ENCODE measurements at regions of chr3 and their contacts with region 1.

Region 1: DNA sequence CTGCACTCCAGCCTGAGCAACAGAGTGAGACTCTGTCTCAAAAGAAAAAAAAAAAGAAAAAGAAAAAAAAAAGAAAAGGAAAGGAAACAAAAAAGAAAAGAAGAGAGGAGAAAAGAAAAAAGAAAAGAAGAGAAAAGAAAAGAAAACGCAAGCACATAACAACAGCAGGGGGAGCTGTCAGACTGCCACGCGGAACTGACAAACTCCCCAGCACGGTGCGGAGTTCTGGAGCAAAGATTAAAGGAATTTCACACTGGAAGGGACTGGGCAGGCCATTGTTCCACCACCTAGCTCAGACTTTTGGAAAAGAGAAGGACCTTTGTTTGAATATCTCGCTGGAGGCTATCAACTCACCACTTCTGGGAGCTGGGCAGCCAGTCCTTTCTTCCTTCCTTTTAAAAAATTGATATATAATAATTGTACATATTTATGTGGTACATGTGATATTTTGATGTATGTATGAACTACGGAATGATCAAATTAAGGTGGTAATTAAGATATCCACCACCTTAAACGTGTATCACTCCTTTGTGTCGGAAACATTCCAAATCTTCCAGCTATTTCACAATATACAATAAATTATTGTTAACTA is 40.5 kb downstream of the DPPA2 start:
- DNase-seq: peak; percentile 18 to 32 (median 22)
- ATAC-seq: peak; percentile 61
- H3K4me3 ChIP-seq: no peak overlapping the region
- H3K27ac ChIP-seq: no peak overlapping the region
- H3K4me1 ChIP-seq: no peaks in the 10 kb centered on the region
- H3K27me3 ChIP-seq: no peaks in the 10 kb centered on the region
- CTCF ChIP-seq: peak; percentile 48 to 64 (median 51)
- EP300 ChIP-seq: no peak
- POLR2A ChIP-seq: no peak
- RAD21 ChIP-seq: peak; percentile 17 to 63; a peak in 3 of 4 replicates

Region 2: DNA sequence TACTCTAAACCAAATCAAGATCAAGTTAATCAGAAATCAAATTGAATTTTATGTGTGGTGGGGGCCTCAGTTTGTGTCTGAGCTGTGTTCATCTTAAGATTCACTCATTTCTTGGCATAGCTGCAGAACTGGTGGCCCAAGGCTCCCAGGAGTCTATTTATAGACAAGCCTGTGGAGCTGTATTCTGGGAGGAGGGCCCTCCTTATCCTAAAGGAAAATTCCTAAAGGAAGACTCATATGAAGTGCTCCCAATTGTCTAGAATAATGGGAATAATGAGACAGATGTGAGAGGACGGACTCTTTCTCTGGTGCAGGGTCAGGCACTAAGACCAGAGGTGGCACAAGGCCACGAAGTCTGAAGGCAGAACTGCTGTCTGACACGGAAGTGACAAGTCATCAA is 100.4 kb before region 1 on chr3:
- CTCF ChIA-PET with region 1: no interaction called
- POLR2A ChIA-PET with region 1: no interaction called
- in situ Hi-C with region 1: no loop called
- intact Hi-C with region 1: no loop called
- DNase-seq: no peak
- ATAC-seq: no peak
- H3K4me3 ChIP-seq: no peak overlapping the region
- H3K27ac ChIP-seq: no peak overlapping the region
- H3K4me1 ChIP-seq: no peaks in the 10 kb centered on the region
- H3K27me3 ChIP-seq: no peaks in the 10 kb centered on the region
- CTCF ChIP-seq: no peak
- EP300 ChIP-seq: no peak
- POLR2A ChIP-seq: no peak
- RAD21 ChIP-seq: no peak

Region 3: DNA sequence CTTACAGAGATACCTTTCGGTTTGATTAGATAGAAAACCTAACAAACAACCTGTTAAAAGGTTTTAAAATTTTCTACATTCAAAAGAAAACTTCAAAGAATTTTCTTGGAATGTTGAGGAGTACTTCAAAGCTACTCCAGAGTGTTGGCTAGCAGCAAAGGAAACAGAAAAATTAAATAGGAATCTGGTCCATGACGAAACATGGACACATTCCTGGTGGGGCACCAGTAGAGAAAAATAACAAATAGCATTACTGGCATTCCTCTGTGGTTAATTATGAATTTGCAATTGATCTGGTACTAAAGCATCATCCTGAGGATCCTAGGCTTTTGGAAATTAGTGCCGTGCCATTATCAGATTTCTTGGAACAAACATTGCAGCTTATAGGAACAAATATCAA is 121.0 kb after region 1 on chr3:
- CTCF ChIA-PET with region 1: no interaction called
- POLR2A ChIA-PET with region 1: interaction called, 4 read pairs
- in situ Hi-C with region 1: no loop called
- intact Hi-C with region 1: loop called (anchors 2 kb)
- DNase-seq: no peak
- ATAC-seq: no peak
- H3K4me3 ChIP-seq: no peak overlapping the region
- H3K27ac ChIP-seq: no peak overlapping the region
- H3K4me1 ChIP-seq: peaks cover 0 to 4% of the 10 kb centered on the region in 2 experiments; a peak in 2 of 5 replicates
- H3K27me3 ChIP-seq: no peaks in the 10 kb centered on the region
- CTCF ChIP-seq: no peak
- EP300 ChIP-seq: no peak
- POLR2A ChIP-seq: no peak
- RAD21 ChIP-seq: no peak

Region 4: GRCh38 chr3:110314512-110315114 is 1038.8 kb after region 1 on chr3:
- CTCF ChIA-PET with region 1: no interaction called
- POLR2A ChIA-PET with region 1: no interaction called
- in situ Hi-C with region 1: no loop called
- intact Hi-C with region 1: loop called (anchors 5 kb)
- DNase-seq: peak; percentile 15 to 56 (median 42)
- ATAC-seq: peak; percentile 78
- H3K4me3 ChIP-seq: no peak overlapping the region
- H3K27ac ChIP-seq: no peak overlapping the region
- H3K4me1 ChIP-seq: no peaks in the 10 kb centered on the region
- H3K27me3 ChIP-seq: no peaks in the 10 kb centered on the region
- CTCF ChIP-seq: peak; percentile 39 to 51 (median 50)
- EP300 ChIP-seq: no peak
- POLR2A ChIP-seq: no peak
- RAD21 ChIP-seq: peak in 1 of 2 experiments; percentile 56; a peak in 2 of 4 replicates